ENCODE measurements at regions of chr21 and their contacts with region 1.

Region 1: DNA sequence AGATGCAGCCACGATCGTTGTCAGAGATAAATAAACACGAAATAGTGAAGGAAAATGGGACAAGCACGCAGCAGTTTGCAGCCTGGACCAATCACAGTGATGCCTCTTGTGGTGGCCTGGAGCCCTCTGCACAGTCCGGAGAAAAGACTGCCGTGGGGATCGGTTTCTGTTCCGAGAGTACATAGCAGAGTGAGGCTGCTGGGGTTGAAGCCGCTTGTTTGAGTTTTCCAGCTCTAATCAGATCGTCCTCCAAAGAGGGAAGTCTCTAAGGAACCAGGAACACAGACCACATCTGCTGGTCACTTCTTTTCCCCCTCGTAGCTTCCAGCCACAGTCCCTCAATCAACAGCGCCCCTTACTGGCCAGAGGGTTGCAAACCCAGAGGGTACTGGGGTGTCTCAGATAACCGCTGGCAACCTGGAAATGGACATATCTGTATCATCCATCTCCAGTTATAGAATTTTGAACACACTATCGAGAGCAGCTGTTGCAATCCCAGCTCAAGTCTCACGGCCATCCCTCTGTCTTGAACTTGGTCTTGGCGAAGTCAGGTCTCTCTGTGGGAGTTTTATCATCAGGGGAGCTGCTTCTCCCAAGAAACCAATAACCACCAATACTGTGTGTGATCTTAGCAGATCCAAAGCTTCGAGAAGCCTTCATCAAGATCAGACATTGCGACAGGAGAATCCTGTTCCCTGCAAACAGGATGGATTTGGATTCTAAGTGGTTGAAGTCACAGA is 57.4 kb downstream of the OLIG1 start:
- DNase-seq: peak; percentile 27 to 85 (median 77)
- H3K4me3 ChIP-seq: peak overlapping the region; percentile 12 to 68 (median 48)
- H3K27ac ChIP-seq: peak overlapping the region; percentile 66 to 99 (median 90)
- H3K27me3 ChIP-seq: peaks cover 0 to 21% (median 0%) of the 10 kb centered on the region in 45 donors
- CTCF ChIP-seq: peak; percentile 38 to 97 (median 86)

Region 2: GRCh38 chr21:32735524-32735923 is 391.8 kb before region 1 on chr21:
- intact Hi-C with region 1: no loop called
- DNase-seq: no peak
- H3K4me3 ChIP-seq: no peak overlapping the region
- H3K27ac ChIP-seq: no peak overlapping the region
- H3K27me3 ChIP-seq: no peaks in the 10 kb centered on the region
- CTCF ChIP-seq: no peak

Region 3: GRCh38 chr21:32934829-32935228 is 192.5 kb before region 1 on chr21:
- intact Hi-C with region 1: loop called (anchors 2 to 5 kb)
- DNase-seq: no peak
- H3K4me3 ChIP-seq: no peak overlapping the region
- H3K27ac ChIP-seq: no peak overlapping the region
- H3K27me3 ChIP-seq: peaks cover 0 to 7% (median 0%) of the 10 kb centered on the region in 45 donors
- CTCF ChIP-seq: no peak

Region 4: GRCh38 chr21:32994305-32994704 is 133.0 kb before region 1 on chr21:
- intact Hi-C with region 1: loop called in 1 of 2 experiments (anchors 2 kb)
- DNase-seq: no peak
- H3K4me3 ChIP-seq: no peak overlapping the region
- H3K27ac ChIP-seq: peak overlapping the region in 4 of 59 donors; percentile 12 to 38 (median 22)
- H3K27me3 ChIP-seq: peaks cover 0 to 7% (median 0%) of the 10 kb centered on the region in 45 donors
- CTCF ChIP-seq: peak in 52 of 56 donors; percentile 13 to 72 (median 47)

Region 5: GRCh38 chr21:33069976-33070811 is 57.1 kb before region 1 on chr21 and contains the start of gene OLIG1:
- intact Hi-C with region 1: loop called (anchors 2 kb)
- DNase-seq: peak; percentile 64 to 91 (median 76)
- H3K4me3 ChIP-seq: peak within 1 kb of the TSS; percentile 39 to 84 (median 65)
- H3K27ac ChIP-seq: peak within 1 kb of the TSS in 57 of 59 donors; percentile 22 to 94 (median 85)
- H3K27me3 ChIP-seq: peaks cover 0 to 76% (median 51%) of the 10 kb centered on the region in 45 donors
- CTCF ChIP-seq: peak in 6 of 56 donors; percentile 6 to 40 (median 10)
- total RNA-seq, gene OLIG1: 30.7 to 365 (median 119) TPM

Measured in dorsolateral prefrontal cortex (tissue), 120 donors.